Activated CD4-positive, alpha-beta memory T cell treated with anti-CD3 and anti-CD28 coated beads, Interleukin-2, amount 10 ng/mL, durations not matched to agents 7 days and 5 days (primary cell): ENCODE measurements at regions of chr1 and their contacts with region 1.

Region 1: DNA sequence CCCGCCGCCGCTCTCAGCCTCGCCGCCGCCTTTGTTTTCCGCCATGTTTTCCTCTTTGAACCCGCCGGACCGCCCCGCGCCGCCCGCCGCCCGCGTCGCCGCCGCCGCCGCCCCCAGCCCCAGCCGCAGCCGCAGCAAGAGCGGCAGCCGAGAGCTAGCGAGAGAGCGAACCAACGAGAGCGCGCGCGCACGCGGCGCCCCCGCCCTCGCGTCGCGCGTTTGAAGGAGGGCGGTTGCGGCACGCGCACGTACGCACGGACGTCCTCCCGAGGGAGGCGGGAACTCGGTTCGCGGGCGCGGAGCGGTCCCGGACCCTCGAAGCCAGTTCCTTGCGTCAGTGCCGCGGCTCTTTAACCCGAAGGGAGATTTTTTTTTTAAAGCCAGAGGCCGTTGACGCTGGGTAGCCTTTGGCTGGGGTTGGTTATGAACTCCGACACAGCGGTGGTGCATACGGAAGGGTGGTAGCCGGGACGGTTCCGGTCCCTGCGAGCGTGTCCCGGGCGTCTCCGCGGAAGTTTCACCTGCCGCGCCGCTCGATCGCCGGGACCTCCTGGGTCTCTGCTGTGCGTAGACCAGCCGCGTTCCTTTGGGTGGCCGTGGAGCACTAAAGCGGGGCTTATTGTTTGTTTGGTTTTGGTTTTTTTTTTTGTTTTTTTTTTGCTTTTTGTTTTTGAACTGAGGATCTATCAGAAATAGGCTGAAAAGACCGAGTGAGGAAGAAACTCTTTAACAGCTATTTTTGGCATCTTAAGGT is at the start of gene TRIM33:
- DNase-seq: peak; percentile 92
- H3K4me3 Mint-ChIP-seq: peak within 1 kb of the TSS; percentile 93
- H3K27ac Mint-ChIP-seq: peak within 1 kb of the TSS; percentile 98
- H3K4me1 Mint-ChIP-seq: peaks cover 47% of the 10 kb centered on the region
- H3K27me3 Mint-ChIP-seq: no peaks in the 10 kb centered on the region
- total RNA-seq, gene TRIM33: 36.0 to 36.5 TPM

Region 2: DNA sequence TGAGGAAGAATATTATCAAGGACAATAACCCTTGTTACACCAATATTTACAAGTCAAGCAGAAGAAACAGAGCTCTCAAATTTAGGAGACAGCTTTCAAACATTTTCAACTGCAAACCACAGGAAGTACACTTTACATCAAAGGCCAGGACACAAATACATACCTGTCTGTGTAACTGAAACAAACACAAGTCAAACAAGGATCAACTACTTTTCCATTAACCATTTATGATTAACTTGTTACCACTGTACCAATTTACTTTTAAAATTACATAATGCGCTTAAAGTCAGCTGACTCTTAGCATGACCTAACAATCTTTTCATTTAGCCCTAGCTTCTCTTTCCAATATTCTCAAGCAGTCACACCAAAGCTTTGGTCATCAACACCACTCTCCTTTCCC is 43.7 kb before region 1 on chr1:
- CTCF ChIA-PET with region 1: interaction called, 4 read pairs
- POLR2A ChIA-PET with region 1: interaction called, 10 read pairs
- DNase-seq: no peak
- H3K4me3 Mint-ChIP-seq: no peak overlapping the region
- H3K27ac Mint-ChIP-seq: peak overlapping the region; percentile 11
- H3K4me1 Mint-ChIP-seq: peaks cover 32% of the 10 kb centered on the region
- H3K27me3 Mint-ChIP-seq: no peaks in the 10 kb centered on the region

Region 3: GRCh38 chr1:114549137-114549536 is 37.9 kb after region 1 on chr1:
- CTCF ChIA-PET with region 1: no interaction called
- POLR2A ChIA-PET with region 1: no interaction called
- DNase-seq: no peak
- H3K4me3 Mint-ChIP-seq: no peak overlapping the region
- H3K27ac Mint-ChIP-seq: no peak overlapping the region
- H3K4me1 Mint-ChIP-seq: no peaks in the 10 kb centered on the region
- H3K27me3 Mint-ChIP-seq: peaks cover 1% of the 10 kb centered on the region

Region 4: GRCh38 chr1:114581335-114582287 is 70.4 kb after region 1 on chr1 and contains the start of gene BCAS2:
- CTCF ChIA-PET with region 1: interaction called, 3 read pairs
- POLR2A ChIA-PET with region 1: interaction called, 21 read pairs
- DNase-seq: peak; percentile 98
- H3K4me3 Mint-ChIP-seq: peak within 1 kb of the TSS; percentile 100
- H3K27ac Mint-ChIP-seq: peak within 1 kb of the TSS; percentile 94
- H3K4me1 Mint-ChIP-seq: peaks cover 40% of the 10 kb centered on the region
- H3K27me3 Mint-ChIP-seq: no peaks in the 10 kb centered on the region
- total RNA-seq, gene BCAS2: 45.0 to 45.5 TPM